ENCODE measurements at regions of chr2 and their contacts with region 1.

Region 1: DNA sequence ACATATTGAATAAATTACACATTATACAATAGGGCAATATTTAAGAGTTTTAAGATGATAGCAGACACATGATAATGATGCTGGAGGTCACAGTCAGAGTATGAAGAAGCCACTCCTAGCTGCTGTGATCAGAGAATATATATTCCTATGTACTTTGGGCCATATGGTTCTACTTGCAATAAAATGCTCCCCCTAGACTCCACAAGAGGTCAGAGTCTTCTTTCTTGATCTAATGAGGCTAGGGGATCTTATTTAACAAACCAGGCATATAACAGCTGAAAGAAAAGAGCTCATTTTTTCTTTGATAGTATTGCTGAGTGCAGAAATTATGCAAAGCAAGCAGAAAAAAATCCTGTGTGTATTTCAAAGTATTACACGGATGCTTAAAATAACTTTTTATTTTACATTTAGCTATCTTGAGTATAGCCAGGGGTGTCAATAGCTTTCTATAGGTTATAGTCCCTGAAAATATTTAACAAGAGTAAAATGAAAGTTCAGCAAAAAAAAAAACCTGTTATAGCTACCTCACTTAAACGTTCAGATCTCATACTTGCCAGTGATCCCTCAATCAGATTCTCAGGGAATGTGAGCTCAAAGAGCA is 748.7 kb upstream of the CHAC2 start:
- DNase-seq: peak; percentile 47
- ATAC-seq: peak; percentile 77
- H3K4me3 ChIP-seq: no peak overlapping the region
- H3K27ac ChIP-seq: no peak overlapping the region
- H3K4me1 ChIP-seq: peaks cover 11% of the 10 kb centered on the region
- H3K27me3 ChIP-seq: no peaks in the 10 kb centered on the region
- CTCF ChIP-seq: peak; percentile 69

Region 2: DNA sequence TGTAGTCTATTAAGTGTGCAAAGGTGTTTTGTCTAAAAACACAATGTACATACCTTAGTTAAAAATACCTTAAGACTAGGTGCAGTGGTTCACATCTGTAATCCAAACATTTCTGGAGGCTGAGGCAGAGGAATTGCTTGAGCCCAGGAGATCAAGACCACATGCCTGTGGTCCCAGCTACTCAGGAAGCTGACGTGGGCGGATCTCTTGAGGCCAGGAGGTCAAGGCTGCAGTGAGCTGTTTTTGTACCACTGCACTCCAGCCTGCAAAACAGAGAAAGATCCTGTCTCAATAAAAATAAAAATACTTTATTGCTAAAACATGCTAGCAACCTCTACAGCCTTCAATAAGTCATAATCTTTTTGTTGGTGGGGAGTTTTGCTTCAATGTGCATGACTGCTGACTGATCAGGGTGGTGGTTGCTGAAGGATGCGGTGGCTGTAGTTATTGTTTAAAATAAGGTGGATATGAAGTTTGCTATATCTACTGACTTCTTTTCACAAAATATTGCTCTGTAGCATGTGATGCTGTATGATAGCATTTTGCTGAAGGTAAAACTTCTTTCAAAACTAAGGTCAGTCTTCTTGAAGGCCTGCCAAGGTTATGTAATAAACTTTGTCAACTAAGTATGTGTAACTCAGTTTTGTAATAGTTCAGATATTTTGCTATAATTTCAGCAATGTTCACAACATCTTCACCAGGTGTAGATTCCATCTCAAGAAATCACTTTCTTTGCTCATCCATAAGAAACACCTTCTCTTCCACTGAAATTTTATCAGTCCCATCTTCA is 749.0 kb before region 1 on chr2:
- CTCF ChIA-PET with region 1: no interaction called
- POLR2A ChIA-PET with region 1: no interaction called
- intact Hi-C with region 1: no loop called
- DNase-seq: peak; percentile 6
- ATAC-seq: no peak
- H3K4me3 ChIP-seq: no peak overlapping the region
- H3K27ac ChIP-seq: no peak overlapping the region
- H3K4me1 ChIP-seq: no peaks in the 10 kb centered on the region
- H3K27me3 ChIP-seq: no peaks in the 10 kb centered on the region
- CTCF ChIP-seq: no peak

Region 3: DNA sequence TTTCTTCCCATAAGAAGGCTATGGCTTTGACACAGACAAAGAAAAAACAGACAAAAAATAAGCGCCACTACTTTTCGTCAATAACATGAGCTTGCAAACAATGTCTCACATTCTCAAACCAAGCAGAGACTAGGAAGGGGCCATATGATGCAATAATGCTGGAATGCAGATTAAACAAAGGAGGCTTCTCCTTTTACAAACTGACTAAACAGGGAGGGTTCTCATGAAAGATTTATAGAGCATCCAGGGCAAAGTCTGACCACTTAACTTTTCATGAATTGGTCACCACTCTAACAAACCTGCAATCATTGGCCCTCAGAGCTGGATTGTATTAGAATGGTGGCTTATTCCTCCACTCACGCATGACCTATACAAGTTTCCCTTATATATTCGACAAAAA is 85.3 kb after region 1 on chr2:
- CTCF ChIA-PET with region 1: interaction called, 6 read pairs
- POLR2A ChIA-PET with region 1: no interaction called
- intact Hi-C with region 1: loop called (anchors 5 kb)
- DNase-seq: peak; percentile 95
- ATAC-seq: peak; percentile 95
- H3K4me3 ChIP-seq: no peak overlapping the region
- H3K27ac ChIP-seq: peak overlapping the region; percentile 71
- H3K4me1 ChIP-seq: peaks cover 21% of the 10 kb centered on the region
- H3K27me3 ChIP-seq: no peaks in the 10 kb centered on the region
- CTCF ChIP-seq: no peak

Region 4: DNA sequence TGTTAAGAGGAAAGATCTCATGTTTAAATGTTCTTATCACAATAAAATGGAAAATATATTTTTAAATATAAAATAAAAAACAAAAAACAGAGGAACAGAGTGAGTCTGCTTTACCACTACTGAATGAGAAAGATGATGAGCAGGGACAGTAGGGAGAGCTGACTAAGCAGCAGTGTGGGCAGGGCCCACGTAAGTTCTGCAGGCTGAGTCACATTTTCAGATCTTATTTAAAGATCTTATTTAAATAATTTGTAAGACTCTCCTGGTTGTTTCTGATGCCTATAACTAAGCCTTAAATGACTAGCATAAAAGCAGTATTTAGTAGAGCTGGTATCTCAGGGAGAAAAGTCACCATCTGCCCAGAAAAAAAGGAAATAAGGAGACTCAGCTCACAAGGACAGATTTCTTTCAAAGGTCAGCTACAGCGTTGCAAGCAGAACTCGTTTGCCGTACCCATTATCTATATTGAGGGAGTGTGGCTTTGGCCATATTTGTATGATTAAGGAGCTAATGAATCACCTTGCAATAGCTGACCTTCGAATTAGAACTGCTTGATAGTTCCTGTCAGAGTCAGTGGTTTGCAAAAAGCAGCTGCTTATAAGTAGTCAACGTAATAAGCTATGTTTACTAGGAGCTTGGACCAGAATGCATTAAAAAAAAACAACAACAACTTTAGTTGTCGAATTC is 426.6 kb after region 1 on chr2:
- CTCF ChIA-PET with region 1: no interaction called
- POLR2A ChIA-PET with region 1: no interaction called
- intact Hi-C with region 1: loop called (anchors 10 kb)
- DNase-seq: peak; percentile 76
- ATAC-seq: peak; percentile 93
- H3K4me3 ChIP-seq: peak overlapping the region; percentile 54
- H3K27ac ChIP-seq: peak overlapping the region; percentile 81
- H3K4me1 ChIP-seq: peaks cover 18% of the 10 kb centered on the region
- H3K27me3 ChIP-seq: no peaks in the 10 kb centered on the region
- CTCF ChIP-seq: no peak

Region 5: DNA sequence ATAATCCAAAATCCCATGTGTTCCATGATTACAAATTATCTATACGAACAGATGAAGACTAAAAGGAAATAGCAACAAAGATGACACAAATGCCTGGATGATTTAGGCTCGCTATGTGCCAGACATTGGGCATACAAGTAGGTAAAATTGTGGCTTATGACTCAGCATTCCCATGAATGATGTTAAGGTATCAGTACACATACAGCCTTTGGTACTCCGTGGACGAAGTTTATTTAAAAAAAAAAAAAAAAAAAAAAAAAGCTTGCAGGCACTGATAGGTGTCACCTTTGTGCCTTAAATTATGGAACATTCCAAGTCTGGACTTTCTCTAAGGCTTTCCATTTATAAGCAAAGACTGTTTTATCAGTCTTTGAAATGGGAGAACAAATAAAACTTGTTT is 751.3 kb after region 1 on chr2:
- CTCF ChIA-PET with region 1: no interaction called
- POLR2A ChIA-PET with region 1: interaction called, 39 read pairs
- intact Hi-C with region 1: no loop called
- DNase-seq: peak; percentile 72
- ATAC-seq: no peak
- H3K4me3 ChIP-seq: no peak overlapping the region
- H3K27ac ChIP-seq: peak overlapping the region; percentile 12; the same call in 1 of the 2 replicates
- H3K4me1 ChIP-seq: peaks cover 28% of the 10 kb centered on the region
- H3K27me3 ChIP-seq: no peaks in the 10 kb centered on the region
- CTCF ChIP-seq: no peak

Measured in PC-3 (cell line).